ENCODE measurements at regions of chr3 and their contacts with region 1.

Region 1: DNA sequence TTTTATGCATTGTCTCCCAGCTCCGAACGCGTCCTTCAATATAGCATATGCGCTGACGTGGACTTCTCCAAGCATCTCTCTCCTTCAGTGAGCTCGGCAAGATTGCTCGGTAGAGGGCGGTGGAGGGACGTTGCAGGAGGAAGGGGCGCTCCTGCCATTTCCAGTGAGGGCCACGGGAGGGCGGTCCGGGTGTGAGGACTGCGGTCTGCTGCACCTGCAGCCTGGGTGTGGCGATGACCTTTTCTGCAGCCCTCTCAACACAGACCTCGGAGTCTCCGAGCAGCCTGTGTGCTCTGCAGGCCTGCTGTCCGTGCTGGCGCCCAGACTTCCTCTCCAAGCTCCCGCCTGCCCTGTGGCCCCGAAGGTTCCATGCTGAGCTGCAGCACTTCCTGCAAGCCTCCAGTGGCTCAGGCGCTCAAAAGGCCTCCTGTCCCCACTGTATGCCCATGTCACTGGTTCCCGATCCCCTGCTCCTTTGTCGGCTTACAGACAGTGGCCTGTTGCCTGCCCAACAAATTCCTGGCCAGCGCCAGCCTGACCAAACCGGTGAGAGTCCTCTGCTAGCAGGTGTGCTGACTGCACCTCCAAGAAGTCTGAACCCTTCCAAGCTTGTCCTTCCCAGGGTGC is 8.9 kb upstream of the RTP3 start:
- DNase-seq: peak; percentile 98
- H3K4me3 ChIP-seq: peak overlapping the region in 6 of 8 donors; percentile 2 to 58 (median 11)
- H3K27ac ChIP-seq: peak overlapping the region in 2 of 8 donors; percentile 16 to 20
- H3K4me1 ChIP-seq: peaks cover 5 to 37% (median 18%) of the 10 kb centered on the region in 6 donors
- H3K27me3 ChIP-seq: no peaks in the 10 kb centered on the region
- CTCF ChIP-seq: peak; percentile 97 to 100 (median 98)
- POLR2A ChIP-seq: no peak

Region 2: DNA sequence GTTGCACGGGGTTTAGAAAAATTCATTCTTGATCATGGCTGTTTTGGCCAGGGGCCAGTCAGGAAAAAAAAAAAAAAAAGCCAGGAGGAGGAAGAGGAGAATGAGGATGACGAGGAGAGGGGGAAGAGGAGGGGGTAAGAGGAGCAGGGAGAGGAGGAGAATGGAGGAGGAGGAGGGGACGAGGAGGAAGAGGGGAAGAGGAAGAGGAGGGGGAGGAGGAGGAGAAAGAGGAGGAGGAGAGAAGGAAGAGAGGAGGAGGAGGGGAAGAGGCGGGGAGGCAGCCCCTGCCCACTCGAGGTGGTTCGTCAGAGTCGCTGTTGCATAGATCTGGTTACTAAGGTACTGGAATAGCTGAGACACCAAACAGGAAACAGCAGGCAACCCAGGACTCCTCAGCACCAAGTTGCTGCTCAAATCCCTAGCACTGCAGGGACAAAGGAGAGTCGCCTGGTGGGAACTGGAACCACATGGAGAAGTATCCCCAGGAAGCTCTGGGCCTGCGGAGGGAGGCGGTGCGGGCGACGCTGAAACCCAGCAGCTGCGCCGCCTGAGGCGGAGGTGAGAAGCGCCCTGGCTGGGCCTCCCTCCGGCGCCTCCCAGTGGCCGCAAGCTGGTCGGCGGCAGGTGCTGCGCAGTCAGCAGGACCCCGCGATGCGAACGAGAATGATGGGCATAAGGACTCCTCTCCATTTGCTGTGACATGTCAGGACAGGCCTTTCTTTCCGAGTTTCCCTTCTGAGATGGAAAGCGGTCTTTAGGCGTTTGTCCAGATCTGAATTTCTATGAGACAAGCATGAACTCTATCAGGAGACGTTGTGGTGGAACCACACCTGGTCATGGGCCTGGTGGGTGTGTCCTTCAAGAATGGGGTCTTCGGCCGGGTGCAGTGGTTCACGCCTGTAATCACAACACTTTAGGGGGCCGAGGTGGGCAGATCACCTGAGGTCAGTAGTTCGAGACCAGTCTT is 141.0 kb after region 1 on chr3:
- intact Hi-C with region 1: loop called (anchors 2 kb)
- DNase-seq: peak; percentile 94
- H3K4me3 ChIP-seq: peak overlapping the region in 5 of 8 donors; percentile 2 to 62 (median 14)
- H3K27ac ChIP-seq: peak overlapping the region; percentile 58 to 87 (median 81)
- H3K4me1 ChIP-seq: peaks cover 9 to 56% (median 27%) of the 10 kb centered on the region in 6 donors
- H3K27me3 ChIP-seq: no peaks in the 10 kb centered on the region
- CTCF ChIP-seq: peak; percentile 84 to 98 (median 96)
- POLR2A ChIP-seq: no peak

Measured in spleen (tissue), 13 donors.